B cell (primary cell): ENCODE measurements at regions of chr7 and their contacts with region 1.

Region 1: DNA sequence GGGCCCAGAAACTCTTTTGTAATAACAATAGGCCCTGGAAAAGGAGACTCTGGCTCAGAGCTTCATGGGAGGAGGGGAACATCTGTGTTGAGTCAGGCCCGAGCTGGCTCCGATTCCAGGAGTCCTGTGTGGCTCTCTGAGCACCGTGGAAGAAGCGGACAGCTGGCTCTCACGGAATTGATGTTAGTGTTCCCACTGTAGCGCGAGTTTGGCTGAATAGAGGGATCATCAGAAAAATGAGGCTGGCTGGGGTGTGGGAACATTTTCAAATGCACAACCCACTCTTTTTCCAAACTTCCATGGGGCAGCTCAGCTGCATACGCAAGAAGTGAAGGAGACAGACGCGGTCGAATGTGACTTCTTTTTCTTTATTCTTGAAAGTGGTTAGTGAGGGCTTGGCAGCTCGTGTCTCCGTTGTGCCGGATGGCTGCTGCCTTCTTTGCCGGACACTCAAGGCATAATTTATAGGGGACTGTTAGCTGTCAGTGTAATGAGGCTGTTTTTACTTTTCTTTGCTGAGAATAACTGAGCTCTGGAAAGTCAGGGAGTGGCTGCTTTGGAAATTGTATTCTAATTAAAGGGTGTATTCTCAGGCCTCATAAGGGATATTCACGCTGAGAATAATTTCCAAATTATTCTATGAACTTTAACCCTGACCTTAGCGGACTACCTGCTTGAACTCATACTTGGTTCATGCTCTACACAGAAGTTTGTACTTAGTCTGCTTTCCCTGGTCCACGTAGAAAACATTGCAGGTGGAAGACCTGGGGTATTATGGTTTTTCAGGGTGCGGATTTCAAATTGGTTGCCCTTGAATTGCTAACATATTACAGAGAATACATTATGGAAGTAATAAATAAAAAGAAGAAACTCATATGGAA is 23.1 kb downstream of the MDFIC start:
- DNase-seq: no peak
- ATAC-seq: no peak
- H3K4me3 ChIP-seq: no peak overlapping the region
- H3K4me3 Mint-ChIP-seq: no peak overlapping the region
- H3K27ac ChIP-seq: no peak overlapping the region
- H3K27ac Mint-ChIP-seq: no peak overlapping the region
- H3K4me1 ChIP-seq: peaks cover 30 to 43% of the 10 kb centered on the region in 2 donors
- H3K4me1 Mint-ChIP-seq: peaks cover 59% of the 10 kb centered on the region
- H3K27me3 ChIP-seq: no peaks in the 10 kb centered on the region
- H3K27me3 Mint-ChIP-seq: no peaks in the 10 kb centered on the region
- CTCF ChIP-seq: no peak

Region 2: GRCh38 chr7:114901781-114902180 is 43.2 kb before region 1 on chr7:
- CTCF ChIA-PET with region 1: no interaction called
- POLR2A ChIA-PET with region 1: no interaction called
- intact Hi-C with region 1: loop called (anchors 5 kb)
- DNase-seq: no peak
- ATAC-seq: no peak
- H3K4me3 ChIP-seq: no peak overlapping the region
- H3K4me3 Mint-ChIP-seq: no peak overlapping the region
- H3K27ac ChIP-seq: no peak overlapping the region
- H3K27ac Mint-ChIP-seq: no peak overlapping the region
- H3K4me1 ChIP-seq: no peaks in the 10 kb centered on the region
- H3K4me1 Mint-ChIP-seq: no peaks in the 10 kb centered on the region
- H3K27me3 ChIP-seq: peaks cover 0 to 4% (median 0%) of the 10 kb centered on the region in 4 experiments
- H3K27me3 Mint-ChIP-seq: no peaks in the 10 kb centered on the region
- CTCF ChIP-seq: no peak

Region 3: DNA sequence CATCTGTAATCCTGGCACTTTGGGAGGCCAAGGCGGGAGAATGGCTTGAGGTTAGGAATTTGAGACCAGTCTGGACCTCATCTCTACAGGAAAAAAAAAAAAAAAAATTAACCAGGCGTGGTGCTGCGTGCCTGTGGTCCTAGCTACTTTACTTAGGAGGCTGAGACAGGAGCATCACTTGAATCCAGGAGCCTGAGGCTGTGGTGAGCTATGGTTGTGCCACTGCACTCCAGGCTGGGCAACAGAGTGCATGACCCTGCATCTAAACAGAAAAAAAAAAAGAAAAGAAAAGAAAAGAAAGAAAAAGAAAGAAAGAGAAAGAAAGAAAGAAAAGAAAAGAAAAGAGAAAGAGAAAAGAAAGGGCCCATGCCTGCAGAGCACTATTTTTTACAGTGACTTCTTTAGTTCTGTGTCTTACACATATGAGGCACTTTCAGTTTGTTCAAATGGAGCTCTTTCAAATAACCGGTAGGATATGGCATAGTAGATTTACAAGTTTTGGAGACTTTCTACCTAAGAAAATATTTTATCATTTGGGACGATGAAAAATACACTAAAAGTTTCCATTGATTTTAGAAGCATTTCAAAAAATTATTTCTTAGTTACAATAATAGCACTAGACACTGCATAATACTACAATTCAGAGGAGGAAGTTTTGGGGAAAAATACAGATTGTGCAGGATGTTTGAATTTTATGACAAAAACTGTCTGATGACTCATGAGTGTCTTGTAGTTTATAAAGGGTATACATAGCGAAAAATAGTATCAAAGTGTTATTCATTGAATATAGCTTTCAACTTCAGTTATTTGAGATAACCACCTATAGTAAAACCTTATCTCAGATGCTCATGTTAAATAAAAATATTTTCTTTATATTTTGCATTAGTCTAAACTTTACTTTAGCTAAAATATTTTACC is 52.8 kb after region 1 on chr7:
- CTCF ChIA-PET with region 1: no interaction called
- POLR2A ChIA-PET with region 1: no interaction called
- intact Hi-C with region 1: loop called (anchors 5 kb)
- DNase-seq: no peak
- ATAC-seq: no peak
- H3K4me3 ChIP-seq: no peak overlapping the region
- H3K4me3 Mint-ChIP-seq: no peak overlapping the region
- H3K27ac ChIP-seq: no peak overlapping the region
- H3K27ac Mint-ChIP-seq: peak overlapping the region; percentile 21
- H3K4me1 ChIP-seq: no peaks in the 10 kb centered on the region
- H3K4me1 Mint-ChIP-seq: peaks cover 18% of the 10 kb centered on the region
- H3K27me3 ChIP-seq: no peaks in the 10 kb centered on the region
- H3K27me3 Mint-ChIP-seq: no peaks in the 10 kb centered on the region
- CTCF ChIP-seq: no peak